CD4-positive, alpha-beta T cell (primary cell): ENCODE measurements at regions of chr1 and their contacts with region 1.

Region 1: DNA sequence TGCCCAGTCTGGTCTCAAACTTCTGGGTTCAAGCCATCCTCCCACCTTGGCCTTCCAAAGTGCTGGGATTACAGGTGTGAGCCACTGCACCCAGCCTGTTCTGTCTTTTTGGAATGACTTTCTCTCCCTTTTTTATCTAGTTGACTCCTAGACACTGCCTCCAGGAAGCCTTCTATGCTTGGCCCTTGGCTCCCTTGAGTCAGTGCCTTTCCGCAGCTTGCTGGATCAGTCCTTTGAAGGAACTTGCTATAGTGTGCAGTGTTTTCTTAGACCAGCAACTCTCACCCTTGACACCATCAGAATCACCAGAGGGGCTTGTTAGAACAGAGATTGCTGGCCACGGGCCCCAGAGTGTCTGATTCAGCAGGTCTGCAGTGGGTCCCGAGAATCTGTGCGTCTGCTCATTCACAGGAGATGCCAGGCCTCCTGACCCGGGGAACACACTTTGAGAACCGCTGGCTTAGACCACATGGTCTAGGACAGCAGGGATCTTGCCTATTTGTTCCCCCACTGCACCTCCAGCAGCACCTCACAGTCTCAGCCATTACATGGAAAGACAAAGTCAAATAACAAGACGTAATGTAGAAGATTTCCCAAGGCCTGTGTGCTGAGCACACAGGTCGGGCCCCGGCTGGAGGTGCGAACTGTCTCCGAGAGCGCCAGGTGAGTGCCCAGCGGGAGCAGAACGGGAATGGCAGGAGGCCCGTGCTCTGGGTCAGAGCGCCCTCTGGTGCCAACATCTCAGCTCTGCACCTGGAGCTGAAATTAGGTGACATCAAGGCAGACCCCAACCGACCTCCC is 27.4 kb upstream of the CTPS1 start:
- DNase-seq: peak; percentile 35 to 75 (median 46)
- ATAC-seq: peak; percentile 54
- H3K4me3 ChIP-seq: no peak overlapping the region
- H3K4me3 Mint-ChIP-seq: no peak overlapping the region
- H3K27ac ChIP-seq: no peak overlapping the region
- H3K27ac Mint-ChIP-seq: no peak overlapping the region
- H3K4me1 ChIP-seq: peaks cover 7% of the 10 kb centered on the region
- H3K4me1 Mint-ChIP-seq: no peaks in the 10 kb centered on the region
- H3K27me3 ChIP-seq: peaks cover 3 to 11% of the 10 kb centered on the region in 2 experiments
- H3K27me3 Mint-ChIP-seq: peaks cover 41% of the 10 kb centered on the region
- CTCF ChIP-seq: peak; percentile 93

Region 2: DNA sequence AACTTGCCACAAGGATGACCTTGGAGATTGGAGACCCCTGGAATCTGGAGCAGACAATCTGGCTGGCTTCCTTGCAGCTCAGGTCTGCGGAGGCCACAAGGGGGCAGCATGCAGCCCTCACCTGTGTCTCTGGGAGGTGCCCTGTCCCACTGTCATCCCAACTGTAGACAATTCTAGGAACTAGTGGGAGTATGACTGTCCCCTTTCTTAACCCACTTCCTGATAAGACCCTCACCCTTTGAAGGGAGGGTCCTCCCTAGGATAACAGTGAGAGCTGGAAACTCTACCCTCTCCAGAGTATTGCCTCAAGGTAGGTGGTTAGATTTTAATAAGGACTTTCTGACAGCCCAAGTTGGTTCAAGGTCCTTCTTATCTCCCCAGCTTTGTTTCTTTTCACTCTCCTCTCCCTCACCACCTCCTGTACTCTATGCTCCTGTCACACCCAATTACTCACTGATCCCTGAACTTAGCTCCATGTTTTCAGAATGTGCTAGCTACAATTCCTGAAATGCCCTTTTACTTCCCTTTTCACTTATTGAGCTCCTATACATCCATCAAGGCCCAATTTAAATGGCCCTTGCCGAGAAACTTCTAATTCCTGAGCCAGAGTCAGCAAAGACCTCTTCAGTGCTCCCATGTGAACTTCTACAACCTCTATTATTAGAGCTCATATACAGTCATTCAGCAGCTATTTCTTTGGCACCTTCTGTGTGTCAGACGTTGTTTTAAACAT is 177.7 kb before region 1 on chr1:
- CTCF ChIA-PET with region 1: interaction called, 14 read pairs
- POLR2A ChIA-PET with region 1: no interaction called
- intact Hi-C with region 1: loop called (anchors 2 to 5 kb)
- DNase-seq: peak; percentile 51 to 80 (median 61)
- ATAC-seq: peak; percentile 64
- H3K4me3 ChIP-seq: no peak overlapping the region
- H3K4me3 Mint-ChIP-seq: no peak overlapping the region
- H3K27ac ChIP-seq: no peak overlapping the region
- H3K27ac Mint-ChIP-seq: no peak overlapping the region
- H3K4me1 ChIP-seq: no peaks in the 10 kb centered on the region
- H3K4me1 Mint-ChIP-seq: no peaks in the 10 kb centered on the region
- H3K27me3 ChIP-seq: no peaks in the 10 kb centered on the region
- H3K27me3 Mint-ChIP-seq: no peaks in the 10 kb centered on the region
- CTCF ChIP-seq: peak; percentile 85